GM10248 (cell line): ENCODE measurements at regions of chr2 and their contacts with region 1.

Region 1: DNA sequence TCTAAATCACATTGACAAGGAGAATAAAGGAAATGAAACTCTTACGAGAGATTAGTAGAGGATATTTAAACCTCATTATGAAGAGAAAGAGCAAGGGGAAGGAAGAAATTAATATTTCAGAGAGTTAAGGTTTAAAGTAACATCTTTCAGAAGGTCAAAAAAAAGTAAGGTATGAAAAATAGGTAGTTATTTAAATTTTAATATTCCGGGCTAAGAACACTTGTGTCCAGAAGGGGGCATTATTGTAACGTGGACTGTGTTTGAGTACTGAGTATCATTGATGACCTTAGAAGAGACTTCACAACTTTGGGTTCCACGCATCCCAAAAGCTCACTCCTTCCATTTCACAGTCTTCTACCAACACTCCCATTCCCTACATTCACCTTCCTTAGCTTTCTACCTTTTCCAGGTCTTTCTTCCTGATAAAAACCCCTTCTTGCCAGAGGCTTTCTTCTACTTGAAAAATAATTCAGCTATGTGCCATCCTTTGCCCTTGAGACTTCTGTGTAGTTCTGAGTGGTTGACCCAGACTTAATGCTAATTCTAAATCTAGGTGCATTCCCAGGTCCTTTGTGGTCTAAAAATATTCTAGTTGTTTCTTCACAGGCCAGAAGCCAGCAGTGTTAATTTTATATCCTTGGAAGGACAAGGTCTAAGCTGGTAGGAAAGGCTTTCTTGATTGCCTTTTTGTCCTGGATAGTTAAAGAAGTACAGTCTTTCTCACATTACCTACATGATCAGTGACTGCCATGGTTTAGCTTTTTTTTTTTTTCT is 16.5 kb downstream of the DYNC1I2 start:
- DNase-seq: peak; percentile 47
- CTCF ChIP-seq: peak; percentile 37

Region 2: DNA sequence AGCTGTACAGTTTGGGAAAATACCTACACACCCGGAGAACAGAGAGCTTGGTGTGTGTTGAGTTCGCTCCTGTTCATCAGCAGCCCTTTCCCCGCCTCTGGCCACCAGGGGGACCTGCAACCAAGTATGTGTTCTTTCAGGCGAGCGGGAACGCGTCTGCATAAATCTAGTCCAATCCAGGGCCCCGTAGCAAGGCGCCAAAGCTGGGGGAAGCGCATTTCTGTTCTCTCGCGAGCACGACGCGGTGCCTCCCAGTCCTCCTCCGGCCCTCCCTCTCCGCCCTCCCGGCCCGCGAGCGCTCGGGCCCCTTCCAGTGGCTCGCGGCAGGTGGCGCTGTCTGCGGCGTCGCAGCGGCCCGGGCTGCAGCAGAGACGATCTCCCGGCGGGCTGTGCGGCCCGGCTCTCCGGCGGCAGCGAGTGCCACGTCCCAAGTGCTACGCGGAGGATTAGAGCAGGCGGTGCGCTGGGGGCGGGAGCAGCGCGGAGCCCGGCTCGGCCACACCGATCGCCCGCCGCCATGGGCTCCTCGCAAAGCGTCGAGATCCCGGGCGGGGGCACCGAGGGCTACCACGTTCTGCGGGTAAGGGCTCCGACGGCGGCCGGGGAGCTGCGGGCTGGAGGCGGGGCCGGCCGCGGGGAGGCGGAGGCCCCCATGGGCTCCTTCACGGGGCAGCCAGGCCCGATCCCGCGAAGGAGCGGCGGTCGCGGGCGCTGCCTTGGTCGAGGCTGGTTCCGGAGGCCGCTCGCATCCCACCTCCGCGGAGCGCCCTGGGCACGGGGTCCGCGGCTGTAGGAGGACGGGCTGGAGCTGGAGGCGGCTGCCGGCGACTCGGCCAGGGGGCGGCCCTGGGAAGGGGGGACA is 774.7 kb before region 1 on chr2 and contains the start of gene GORASP2:
- CTCF ChIA-PET with region 1: interaction called, 10 read pairs
- POLR2A ChIA-PET with region 1: no interaction called
- DNase-seq: peak; percentile 98
- CTCF ChIP-seq: peak; percentile 83

Region 3: GRCh38 chr2:171687287-171688128 is 16.3 kb before region 1 on chr2 and contains the start of gene DYNC1I2:
- CTCF ChIA-PET with region 1: interaction called, 36 read pairs
- POLR2A ChIA-PET with region 1: no interaction called
- DNase-seq: peak; percentile 81
- CTCF ChIP-seq: no peak

Region 4: GRCh38 chr2:171723724-171724683 is 20.2 kb after region 1 on chr2:
- CTCF ChIA-PET with region 1: interaction called, 15 read pairs
- POLR2A ChIA-PET with region 1: no interaction called
- DNase-seq: no peak
- CTCF ChIP-seq: no peak

Region 5: GRCh38 chr2:172102391-172103278 is 398.9 kb after region 1 on chr2 and contains the start of gene DLX2:
- CTCF ChIA-PET with region 1: interaction called, 162 read pairs
- POLR2A ChIA-PET with region 1: no interaction called
- DNase-seq: peak; percentile 88
- CTCF ChIP-seq: no peak

Region 6: DNA sequence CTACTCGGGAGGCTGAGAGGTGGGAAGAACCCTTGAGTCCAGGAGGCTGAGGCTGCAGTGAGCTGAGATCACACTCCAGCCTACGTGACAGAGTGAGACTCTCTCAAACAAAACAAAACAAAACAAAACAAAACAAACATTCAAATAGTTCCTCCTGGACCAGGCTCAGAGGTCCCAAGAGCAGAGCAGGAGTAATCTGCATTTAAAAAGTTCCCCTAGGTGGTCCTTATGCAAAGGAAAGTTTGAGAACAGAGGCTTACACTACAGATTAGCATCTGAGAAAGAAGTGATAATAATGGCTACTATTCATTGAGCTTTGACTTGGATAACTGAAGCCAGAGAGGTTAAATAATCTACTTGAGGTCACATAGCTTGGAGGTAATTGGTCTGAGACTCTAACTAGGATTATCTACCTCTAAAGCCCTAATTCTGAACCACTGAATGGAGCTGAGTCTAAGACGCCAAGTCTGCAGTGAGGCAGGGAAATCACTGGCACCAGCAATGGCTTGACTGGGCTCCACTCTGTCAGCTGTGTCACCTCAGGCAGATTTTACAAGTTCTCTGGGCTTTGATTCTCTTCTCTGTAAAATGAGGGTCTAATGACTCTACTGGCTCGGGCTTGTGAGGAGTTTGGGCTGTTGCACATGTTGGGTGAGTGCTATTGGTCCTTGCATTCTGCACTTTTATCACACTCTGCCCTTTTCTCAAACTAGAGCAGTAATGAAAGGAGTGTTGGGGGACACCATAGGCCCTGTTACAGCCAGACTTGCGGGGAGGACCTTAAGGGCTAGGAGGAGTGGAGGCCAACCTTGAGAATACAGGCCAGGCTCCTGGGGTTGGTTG is 428.2 kb after region 1 on chr2:
- CTCF ChIA-PET with region 1: interaction called, 23 read pairs
- POLR2A ChIA-PET with region 1: no interaction called
- DNase-seq: no peak
- CTCF ChIP-seq: no peak